GM10248 (cell line): ENCODE measurements at regions of chr5 and their contacts with region 1.

Region 1: GRCh38 chr5:151223469-151224264 is at the start of gene CCDC69:
- DNase-seq: peak; percentile 76
- CTCF ChIP-seq: no peak

Region 2: DNA sequence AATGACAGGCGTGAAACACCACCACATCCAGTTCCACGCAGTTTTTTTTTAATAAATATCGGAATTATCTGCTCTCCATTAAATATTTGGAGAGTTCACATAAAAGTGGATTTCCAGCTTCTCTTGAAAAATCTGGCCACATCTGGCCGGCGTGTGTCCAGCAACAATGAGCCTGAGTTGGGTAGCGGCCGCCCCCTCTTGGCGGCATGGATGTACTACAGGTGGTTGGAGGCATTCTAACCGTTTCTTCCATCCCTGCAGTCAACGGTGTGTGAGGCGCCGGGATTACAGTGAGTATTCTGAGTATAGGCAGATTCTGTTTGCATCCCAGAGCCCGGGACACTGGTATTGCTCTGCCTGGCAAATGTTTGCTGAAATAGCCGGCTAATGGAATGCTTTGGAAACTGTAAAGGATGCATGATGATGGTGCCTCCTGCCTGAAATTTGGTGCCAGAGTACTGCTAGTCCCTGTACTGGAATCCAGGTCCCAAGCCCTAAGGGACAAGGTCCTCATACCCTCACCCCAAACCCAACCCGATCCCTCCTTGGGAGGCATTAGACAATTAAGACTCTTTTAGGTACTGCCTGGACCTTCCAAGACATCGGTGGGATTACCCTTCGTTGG is 15.7 kb after region 1 on chr5:
- CTCF ChIA-PET with region 1: interaction called, 54 read pairs
- POLR2A ChIA-PET with region 1: interaction called, 8 read pairs
- DNase-seq: peak; percentile 73
- CTCF ChIP-seq: no peak